CD4-positive, alpha-beta memory T cell (primary cell): ENCODE measurements at regions of chr14 and their contacts with region 1.

Region 1: GRCh38 chr14:52552063-52552988 is at the starts of genes GPR137C and TXNDC16:
- DNase-seq: peak; percentile 97 to 100 (median 99)
- H3K4me3 ChIP-seq: peak within 1 kb of the TSS; percentile 67 to 90
- H3K4me3 Mint-ChIP-seq: peak within 1 kb of the TSS; percentile 92 to 99 (median 96)
- H3K27ac ChIP-seq: peak within 1 kb of the TSS; percentile 87
- H3K27ac Mint-ChIP-seq: peak within 1 kb of the TSS; percentile 91 to 99 (median 95)
- H3K4me1 ChIP-seq: peaks cover 23% of the 10 kb centered on the region
- H3K4me1 Mint-ChIP-seq: peaks cover 19 to 39% (median 29%) of the 10 kb centered on the region in 4 donors
- H3K27me3 ChIP-seq: no peaks in the 10 kb centered on the region
- H3K27me3 Mint-ChIP-seq: no peaks in the 10 kb centered on the region
- total RNA-seq, gene GPR137C: 0.20 TPM in 1 of 2 experiments, not detected in the other
- total RNA-seq, gene TXNDC16: 7.0 to 7.6 TPM

Region 2: GRCh38 chr14:51239813-51240803 is 1312.2 kb before region 1 on chr14 and contains the start of gene TMX1:
- CTCF ChIA-PET with region 1: no interaction called
- POLR2A ChIA-PET with region 1: no interaction called
- intact Hi-C with region 1: loop called (anchors 1 kb)
- DNase-seq: peak; percentile 80 to 86 (median 82)
- H3K4me3 ChIP-seq: peak within 1 kb of the TSS; percentile 84 to 99
- H3K4me3 Mint-ChIP-seq: peak within 1 kb of the TSS in 1 of 8 donors; percentile 37
- H3K27ac ChIP-seq: peak within 1 kb of the TSS; percentile 65
- H3K27ac Mint-ChIP-seq: no peak within 1 kb of the TSS
- H3K4me1 ChIP-seq: peaks cover 51% of the 10 kb centered on the region
- H3K4me1 Mint-ChIP-seq: peaks cover 15 to 29% (median 21%) of the 10 kb centered on the region in 4 donors
- H3K27me3 ChIP-seq: no peaks in the 10 kb centered on the region
- H3K27me3 Mint-ChIP-seq: no peaks in the 10 kb centered on the region
- total RNA-seq, gene TMX1: 28.5 to 32.9 TPM

Region 3: GRCh38 chr14:51860164-51860824 is 692.0 kb before region 1 on chr14 and contains the start of gene GNG2:
- CTCF ChIA-PET with region 1: no interaction called
- POLR2A ChIA-PET with region 1: no interaction called
- intact Hi-C with region 1: loop called (anchors 2 kb)
- DNase-seq: peak; percentile 83 to 92 (median 87)
- H3K4me3 ChIP-seq: peak within 1 kb of the TSS; percentile 49 to 77
- H3K4me3 Mint-ChIP-seq: peak within 1 kb of the TSS; percentile 91 to 98 (median 96)
- H3K27ac ChIP-seq: peak within 1 kb of the TSS; percentile 84
- H3K27ac Mint-ChIP-seq: peak within 1 kb of the TSS; percentile 96 to 100 (median 99)
- H3K4me1 ChIP-seq: peaks cover 57% of the 10 kb centered on the region
- H3K4me1 Mint-ChIP-seq: peaks cover 47 to 84% (median 63%) of the 10 kb centered on the region in 4 donors
- H3K27me3 ChIP-seq: no peaks in the 10 kb centered on the region
- H3K27me3 Mint-ChIP-seq: no peaks in the 10 kb centered on the region
- total RNA-seq, gene GNG2: 81.3 to 84.8 TPM

Region 4: DNA sequence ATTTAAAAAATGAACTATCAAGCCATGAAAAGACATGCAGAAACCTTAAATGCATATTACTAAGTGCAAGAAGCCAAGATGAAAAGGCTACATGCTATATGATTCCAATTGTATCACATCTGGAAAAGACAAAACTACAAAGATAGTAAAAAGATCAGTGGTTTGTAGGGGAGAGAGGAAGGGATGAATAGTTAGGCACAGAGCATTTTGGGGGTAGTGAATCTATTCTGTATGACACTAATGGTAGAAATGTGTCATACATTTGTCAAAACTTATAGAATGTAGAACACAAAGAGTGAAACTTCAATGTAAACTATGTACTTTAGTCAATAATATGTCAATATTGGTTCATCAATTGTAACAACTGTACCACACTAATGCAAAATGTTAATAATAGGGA is 20.8 kb before region 1 on chr14:
- CTCF ChIA-PET with region 1: interaction called, 3 read pairs
- POLR2A ChIA-PET with region 1: interaction called, 9 read pairs
- intact Hi-C with region 1: loop called (anchors 2 kb)
- DNase-seq: no peak
- H3K4me3 ChIP-seq: no peak overlapping the region
- H3K4me3 Mint-ChIP-seq: no peak overlapping the region
- H3K27ac ChIP-seq: no peak overlapping the region
- H3K27ac Mint-ChIP-seq: peak overlapping the region in 1 of 7 donors; percentile 11
- H3K4me1 ChIP-seq: no peaks in the 10 kb centered on the region
- H3K4me1 Mint-ChIP-seq: peaks cover 0 to 2% (median 0%) of the 10 kb centered on the region in 4 donors
- H3K27me3 ChIP-seq: no peaks in the 10 kb centered on the region
- H3K27me3 Mint-ChIP-seq: no peaks in the 10 kb centered on the region

Region 5: GRCh38 chr14:52706724-52707706 is 154.7 kb after region 1 on chr14 and contains the start of gene PSMC6:
- CTCF ChIA-PET with region 1: no interaction called
- POLR2A ChIA-PET with region 1: interaction called, 16 read pairs
- intact Hi-C with region 1: loop called (anchors 1 kb)
- DNase-seq: peak; percentile 88 to 95 (median 90)
- H3K4me3 ChIP-seq: peak within 1 kb of the TSS; percentile 92 to 96
- H3K4me3 Mint-ChIP-seq: peak within 1 kb of the TSS; percentile 92 to 100 (median 96)
- H3K27ac ChIP-seq: peak within 1 kb of the TSS; percentile 77
- H3K27ac Mint-ChIP-seq: peak within 1 kb of the TSS; percentile 94 to 99 (median 98)
- H3K4me1 ChIP-seq: peaks cover 43% of the 10 kb centered on the region
- H3K4me1 Mint-ChIP-seq: peaks cover 20 to 56% (median 36%) of the 10 kb centered on the region in 4 donors
- H3K27me3 ChIP-seq: no peaks in the 10 kb centered on the region
- H3K27me3 Mint-ChIP-seq: no peaks in the 10 kb centered on the region
- total RNA-seq, gene PSMC6: 85.7 to 86.0 TPM

Region 6: DNA sequence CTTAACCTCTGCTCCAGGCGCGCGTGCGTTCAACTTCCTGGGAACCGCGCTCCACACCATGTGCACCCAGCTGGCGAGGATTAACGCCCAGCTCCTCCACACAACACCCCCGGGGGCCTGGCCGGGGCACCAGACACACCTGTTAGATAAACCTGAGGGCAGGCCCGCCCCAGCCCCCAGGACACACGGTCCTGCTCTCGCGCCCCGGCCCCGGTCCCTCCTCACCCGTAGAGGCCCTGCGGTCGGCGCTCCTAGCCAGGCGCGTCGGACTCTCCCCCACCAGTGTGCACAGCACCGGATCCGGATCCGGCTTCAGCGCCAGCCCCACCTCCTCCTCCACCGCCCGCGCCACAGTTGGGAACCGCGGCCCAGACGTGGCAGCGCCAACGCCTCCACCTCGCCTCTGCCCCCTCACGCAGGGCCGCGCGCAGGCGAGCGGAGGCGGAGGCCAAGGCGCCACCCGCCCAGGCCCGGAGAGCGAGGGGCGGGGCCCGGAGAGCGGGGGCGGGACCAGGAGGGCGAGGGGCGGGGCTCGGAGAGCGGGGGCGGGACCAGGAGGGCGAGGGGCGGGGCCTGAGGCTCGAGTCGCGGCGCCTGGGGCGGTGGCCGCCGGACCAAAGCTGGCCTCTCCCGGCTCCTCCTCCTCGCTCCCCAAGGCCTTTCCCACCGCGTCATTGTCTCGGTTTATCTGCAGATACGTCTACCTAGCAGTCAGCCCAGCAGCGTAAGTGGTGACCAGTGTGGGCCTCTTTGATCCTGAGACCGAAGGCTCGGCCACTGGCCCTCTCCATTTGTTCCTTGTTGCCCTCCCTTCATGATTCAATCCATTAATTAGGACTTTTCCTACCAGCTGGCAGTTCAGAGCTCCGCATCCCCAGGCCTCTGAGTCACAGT is 239.1 kb after region 1 on chr14 and contains the start of gene GNPNAT1:
- CTCF ChIA-PET with region 1: no interaction called
- POLR2A ChIA-PET with region 1: interaction called, 13 read pairs
- intact Hi-C with region 1: loop called (anchors 1 kb)
- DNase-seq: peak; percentile 90 to 93 (median 92)
- H3K4me3 ChIP-seq: peak within 1 kb of the TSS; percentile 57 to 90
- H3K4me3 Mint-ChIP-seq: peak within 1 kb of the TSS; percentile 88 to 97 (median 92)
- H3K27ac ChIP-seq: peak within 1 kb of the TSS; percentile 70
- H3K27ac Mint-ChIP-seq: peak within 1 kb of the TSS; percentile 90 to 96 (median 94)
- H3K4me1 ChIP-seq: peaks cover 32% of the 10 kb centered on the region
- H3K4me1 Mint-ChIP-seq: peaks cover 27 to 48% (median 36%) of the 10 kb centered on the region in 4 donors
- H3K27me3 ChIP-seq: no peaks in the 10 kb centered on the region
- H3K27me3 Mint-ChIP-seq: no peaks in the 10 kb centered on the region
- total RNA-seq, gene GNPNAT1: 10.0 to 15.2 TPM

Region 7: GRCh38 chr14:53011053-53011462 is 458.7 kb after region 1 on chr14:
- CTCF ChIA-PET with region 1: no interaction called
- POLR2A ChIA-PET with region 1: no interaction called
- intact Hi-C with region 1: no loop called
- DNase-seq: no peak
- H3K4me3 ChIP-seq: no peak overlapping the region
- H3K4me3 Mint-ChIP-seq: no peak overlapping the region
- H3K27ac ChIP-seq: no peak overlapping the region
- H3K27ac Mint-ChIP-seq: no peak overlapping the region
- H3K4me1 ChIP-seq: no peaks in the 10 kb centered on the region
- H3K4me1 Mint-ChIP-seq: no peaks in the 10 kb centered on the region
- H3K27me3 ChIP-seq: no peaks in the 10 kb centered on the region
- H3K27me3 Mint-ChIP-seq: peaks cover 2 to 7% of the 10 kb centered on the region in 2 donors